PC-3 (cell line): ENCODE measurements at regions of chr6 and their contacts with region 1.

Region 1: GRCh38 chr6:73074175-73074574 is 151.1 kb downstream of the KHDC1L start:
- DNase-seq: peak; percentile 91
- ATAC-seq: peak; percentile 83
- H3K4me3 ChIP-seq: no peak overlapping the region
- H3K27ac ChIP-seq: peak overlapping the region; percentile 95
- H3K4me1 ChIP-seq: peaks cover 53% of the 10 kb centered on the region
- H3K27me3 ChIP-seq: no peaks in the 10 kb centered on the region
- CTCF ChIP-seq: no peak

Region 2: DNA sequence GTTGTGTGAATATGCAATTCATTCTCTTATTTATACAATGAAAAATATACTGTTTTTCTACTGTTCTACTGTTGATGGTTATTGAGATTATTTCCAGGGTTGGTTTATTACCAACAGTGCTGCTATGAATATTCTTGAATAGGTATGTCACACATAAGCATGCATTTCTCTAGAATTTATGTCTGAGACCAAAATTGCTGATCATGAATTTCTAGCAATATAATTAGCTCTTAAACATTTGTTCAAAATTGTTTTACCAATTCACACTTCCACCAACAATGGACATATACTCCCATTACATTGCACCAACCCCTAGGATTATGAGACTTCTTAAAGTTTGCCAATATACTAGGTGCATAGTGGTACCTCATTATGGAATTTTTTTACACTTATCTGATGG is 616.4 kb before region 1 on chr6:
- CTCF ChIA-PET with region 1: no interaction called
- POLR2A ChIA-PET with region 1: no interaction called
- intact Hi-C with region 1: no loop called
- DNase-seq: no peak
- ATAC-seq: no peak
- H3K4me3 ChIP-seq: no peak overlapping the region
- H3K27ac ChIP-seq: no peak overlapping the region
- H3K4me1 ChIP-seq: no peaks in the 10 kb centered on the region
- H3K27me3 ChIP-seq: no peaks in the 10 kb centered on the region
- CTCF ChIP-seq: no peak

Region 3: GRCh38 chr6:72968704-72969103 is 105.5 kb before region 1 on chr6:
- CTCF ChIA-PET with region 1: no interaction called
- POLR2A ChIA-PET with region 1: no interaction called
- intact Hi-C with region 1: loop called (anchors 1 kb)
- DNase-seq: peak; percentile 90
- ATAC-seq: peak; percentile 79
- H3K4me3 ChIP-seq: no peak overlapping the region
- H3K27ac ChIP-seq: peak overlapping the region; percentile 56
- H3K4me1 ChIP-seq: peaks cover 42% of the 10 kb centered on the region
- H3K27me3 ChIP-seq: no peaks in the 10 kb centered on the region
- CTCF ChIP-seq: no peak

Region 4: DNA sequence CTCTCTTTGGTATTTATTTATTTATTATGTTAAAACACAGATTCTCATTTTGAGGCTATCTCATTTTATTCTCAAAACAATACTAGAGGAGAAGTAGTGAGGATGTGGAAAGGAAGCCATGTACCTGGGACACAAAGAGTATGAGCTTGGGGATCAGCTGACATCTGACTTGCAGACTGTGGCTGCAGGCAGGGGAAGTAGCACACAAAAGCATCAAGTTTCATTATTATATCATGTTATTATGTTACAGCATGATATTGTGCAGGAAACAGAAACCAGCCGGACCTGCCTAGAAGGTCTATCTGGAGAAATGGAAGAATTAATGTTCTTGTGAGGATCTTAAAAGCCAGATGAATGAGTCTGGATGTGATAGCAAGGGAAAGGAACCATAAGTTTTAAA is 97.1 kb before region 1 on chr6:
- CTCF ChIA-PET with region 1: no interaction called
- POLR2A ChIA-PET with region 1: no interaction called
- intact Hi-C with region 1: loop called (anchors 5 kb)
- DNase-seq: peak; percentile 55
- ATAC-seq: peak; percentile 78
- H3K4me3 ChIP-seq: no peak overlapping the region
- H3K27ac ChIP-seq: no peak overlapping the region
- H3K4me1 ChIP-seq: peaks cover 32% of the 10 kb centered on the region
- H3K27me3 ChIP-seq: no peaks in the 10 kb centered on the region
- CTCF ChIP-seq: no peak

Region 5: GRCh38 chr6:73262671-73263569 is 188.7 kb after region 1 on chr6 and contains the start of gene KHDC1:
- CTCF ChIA-PET with region 1: no interaction called
- POLR2A ChIA-PET with region 1: no interaction called
- intact Hi-C with region 1: no loop called
- DNase-seq: peak; percentile 13
- ATAC-seq: peak; percentile 78
- H3K4me3 ChIP-seq: peak within 1 kb of the TSS; percentile 72
- H3K27ac ChIP-seq: no peak within 1 kb of the TSS
- H3K4me1 ChIP-seq: peaks cover 24% of the 10 kb centered on the region
- H3K27me3 ChIP-seq: no peaks in the 10 kb centered on the region
- CTCF ChIP-seq: no peak
- total RNA-seq, gene KHDC1: 5.1 and 7.9 TPM in 2 replicates